CD4-positive, alpha-beta T cell (primary cell): ENCODE measurements at regions of chr5 and their contacts with region 1.

Region 1: DNA sequence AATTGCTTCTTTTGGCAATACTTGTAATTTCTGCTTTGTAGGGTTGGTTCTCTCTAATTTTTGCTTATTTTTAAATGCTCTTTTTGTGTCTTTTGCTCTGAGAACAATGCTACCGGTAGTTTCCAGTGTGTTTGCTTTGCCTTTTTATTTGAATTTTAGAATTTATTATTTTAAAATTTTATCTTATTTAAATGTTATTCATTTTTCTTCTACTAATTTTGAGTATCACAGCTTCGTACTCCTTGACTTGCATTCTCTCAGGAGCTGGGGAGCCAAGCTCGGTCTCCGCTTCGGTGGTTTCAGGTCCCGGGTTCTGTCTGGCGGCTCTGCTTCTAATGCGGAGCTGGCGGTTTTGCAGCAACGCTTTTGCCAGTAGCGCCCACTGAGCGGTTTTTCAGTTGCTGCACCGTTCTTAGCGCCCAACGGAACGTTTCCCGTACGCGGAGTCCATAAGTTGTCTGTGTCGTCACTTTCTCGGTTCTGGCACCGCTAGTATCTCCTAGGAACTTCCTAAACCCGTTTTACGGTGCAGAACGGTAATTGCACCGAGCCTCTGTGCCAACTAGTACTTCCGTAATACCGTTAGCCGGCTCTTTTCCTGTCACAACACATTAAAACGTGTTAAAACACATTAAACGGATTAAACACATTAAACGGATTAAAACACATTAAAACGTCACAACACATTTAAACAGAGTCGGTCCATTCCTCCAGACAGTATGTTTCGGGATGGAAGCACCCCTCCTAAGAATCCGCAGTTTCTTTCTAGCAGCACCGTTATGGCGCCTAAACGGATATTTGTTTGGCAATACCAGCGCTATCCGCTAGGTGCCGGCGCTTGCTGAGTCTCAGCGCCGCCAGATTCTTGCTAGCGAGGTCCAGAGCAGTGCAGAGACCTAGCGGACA is 45.6 kb downstream of the ANXA2R start:
- DNase-seq: peak; percentile 81 to 94 (median 84)
- ATAC-seq: peak; percentile 59
- H3K4me3 ChIP-seq: peak overlapping the region; percentile 80
- H3K4me3 Mint-ChIP-seq: peak overlapping the region; percentile 100
- H3K27ac ChIP-seq: peak overlapping the region; percentile 93 to 98
- H3K27ac Mint-ChIP-seq: peak overlapping the region; percentile 99
- H3K4me1 ChIP-seq: peaks cover 46% of the 10 kb centered on the region
- H3K4me1 Mint-ChIP-seq: peaks cover 48% of the 10 kb centered on the region
- H3K27me3 ChIP-seq: no peaks in the 10 kb centered on the region
- H3K27me3 Mint-ChIP-seq: peaks cover 9% of the 10 kb centered on the region
- CTCF ChIP-seq: peak; percentile 85

Region 2: GRCh38 chr5:42940853-42941252 is 53.6 kb before region 1 on chr5:
- CTCF ChIA-PET with region 1: no interaction called
- POLR2A ChIA-PET with region 1: interaction called, 13 read pairs
- intact Hi-C with region 1: no loop called
- DNase-seq: no peak
- ATAC-seq: no peak
- H3K4me3 ChIP-seq: no peak overlapping the region
- H3K4me3 Mint-ChIP-seq: no peak overlapping the region
- H3K27ac ChIP-seq: no peak overlapping the region
- H3K27ac Mint-ChIP-seq: no peak overlapping the region
- H3K4me1 ChIP-seq: no peaks in the 10 kb centered on the region
- H3K4me1 Mint-ChIP-seq: peaks cover 5% of the 10 kb centered on the region
- H3K27me3 ChIP-seq: no peaks in the 10 kb centered on the region
- H3K27me3 Mint-ChIP-seq: no peaks in the 10 kb centered on the region
- CTCF ChIP-seq: no peak

Region 3: GRCh38 chr5:43008369-43009153 is 14.1 kb after region 1 on chr5:
- CTCF ChIA-PET with region 1: interaction called, 32 read pairs
- POLR2A ChIA-PET with region 1: interaction called, 1,251 read pairs
- intact Hi-C with region 1: loop called (anchors 1 kb)
- DNase-seq: peak; percentile 87 to 97 (median 92)
- ATAC-seq: peak; percentile 63
- H3K4me3 ChIP-seq: peak overlapping the region; percentile 82
- H3K4me3 Mint-ChIP-seq: peak overlapping the region; percentile 92
- H3K27ac ChIP-seq: peak overlapping the region; percentile 91 to 95
- H3K27ac Mint-ChIP-seq: peak overlapping the region; percentile 95
- H3K4me1 ChIP-seq: peaks cover 36% of the 10 kb centered on the region
- H3K4me1 Mint-ChIP-seq: peaks cover 42% of the 10 kb centered on the region
- H3K27me3 ChIP-seq: no peaks in the 10 kb centered on the region
- H3K27me3 Mint-ChIP-seq: no peaks in the 10 kb centered on the region
- CTCF ChIP-seq: no peak

Region 4: DNA sequence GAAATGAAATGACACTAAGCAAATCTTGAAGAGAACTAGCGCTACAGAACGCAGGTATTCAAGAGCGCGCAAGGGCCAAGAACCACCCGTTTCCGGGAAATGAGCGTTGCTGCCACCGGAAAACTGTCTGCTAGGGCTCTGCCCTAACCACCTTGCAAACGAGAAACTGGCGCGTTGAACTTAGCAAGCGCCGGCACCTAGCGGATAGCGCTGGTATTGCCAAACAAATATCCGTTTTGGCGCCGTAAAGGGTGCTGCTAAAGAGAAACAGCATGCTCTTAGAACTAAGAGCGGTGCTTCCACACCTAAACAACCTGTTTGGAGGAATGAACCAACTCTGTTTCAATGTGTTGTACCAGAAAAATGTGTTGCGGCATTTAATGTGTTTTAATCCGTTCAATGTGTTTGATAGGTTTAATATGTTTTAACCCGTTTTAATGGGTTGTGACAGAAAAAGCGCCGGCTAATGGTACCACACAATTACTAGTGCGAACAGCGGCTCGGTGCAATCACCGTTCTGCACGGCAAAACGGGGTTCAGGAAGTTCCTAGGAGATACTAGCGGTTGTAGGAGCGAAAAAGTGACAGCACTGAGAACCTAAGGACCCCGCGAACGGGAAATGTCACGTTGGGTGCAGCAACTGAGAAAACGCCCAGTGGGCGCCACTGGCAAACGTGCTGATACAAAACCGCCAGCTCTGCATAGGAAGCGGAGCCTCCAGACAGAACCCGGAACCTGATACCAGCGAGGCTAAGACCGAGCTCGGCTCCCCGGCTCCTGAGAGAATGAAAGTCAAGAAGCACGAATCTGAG is 46.0 kb after region 1 on chr5 and contains the start of gene ANXA2R:
- CTCF ChIA-PET with region 1: interaction called, 36 read pairs
- POLR2A ChIA-PET with region 1: interaction called, 900 read pairs
- intact Hi-C with region 1: loop called (anchors 1 to 2 kb)
- DNase-seq: peak; percentile 90 to 98 (median 93)
- ATAC-seq: peak; percentile 53
- H3K4me3 ChIP-seq: peak within 1 kb of the TSS; percentile 84
- H3K4me3 Mint-ChIP-seq: peak within 1 kb of the TSS; percentile 98
- H3K27ac ChIP-seq: peak within 1 kb of the TSS; percentile 96 to 98
- H3K27ac Mint-ChIP-seq: peak within 1 kb of the TSS; percentile 98
- H3K4me1 ChIP-seq: peaks cover 73% of the 10 kb centered on the region
- H3K4me1 Mint-ChIP-seq: peaks cover 46% of the 10 kb centered on the region
- H3K27me3 ChIP-seq: no peaks in the 10 kb centered on the region
- H3K27me3 Mint-ChIP-seq: no peaks in the 10 kb centered on the region
- CTCF ChIP-seq: peak; percentile 86
- total RNA-seq, gene ANXA2R: 45.6 to 48.9 TPM

Region 5: DNA sequence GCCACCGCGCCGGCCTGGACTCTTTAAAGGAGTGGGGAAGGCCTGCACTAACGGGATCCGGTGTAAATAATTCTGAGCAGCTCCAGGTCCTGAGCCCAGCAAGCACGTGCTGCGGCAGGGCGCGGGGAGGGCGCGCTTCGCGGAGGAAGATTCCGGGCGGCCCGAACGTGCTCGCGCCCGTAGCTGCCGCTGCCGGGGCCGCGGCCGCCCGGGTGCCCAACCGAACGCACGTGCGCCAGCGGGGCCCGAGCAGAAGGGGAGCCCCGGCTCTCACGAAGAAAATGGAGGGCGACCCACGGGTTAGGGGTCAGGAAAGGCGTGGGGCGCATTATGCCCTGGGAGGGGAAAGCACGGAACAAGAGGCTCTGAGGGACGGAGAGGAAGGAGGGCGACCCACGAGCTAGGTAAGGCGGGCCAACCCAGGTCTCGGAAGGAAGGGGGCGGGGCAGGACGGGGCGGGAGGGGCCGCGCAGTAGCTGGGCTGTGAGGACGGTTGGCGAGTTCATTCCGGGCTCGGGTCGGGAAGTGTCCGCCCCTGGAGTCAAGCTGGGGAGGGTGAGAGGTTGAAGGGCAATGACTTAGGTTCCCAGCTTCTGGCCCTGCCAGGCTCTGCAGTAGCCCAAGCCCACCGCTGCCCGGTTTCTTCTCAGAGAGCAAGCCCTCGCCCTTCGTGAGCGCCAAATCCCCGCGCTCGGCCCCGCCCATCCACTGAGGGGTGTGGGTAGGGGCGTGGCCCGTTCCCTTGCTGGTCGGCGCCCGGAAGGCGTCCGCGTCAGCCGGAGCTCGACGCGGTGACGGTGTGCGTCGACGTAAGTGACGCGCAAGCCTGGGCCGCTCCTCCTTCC is 126.4 kb after region 1 on chr5 and contains the start of gene ZNF131:
- CTCF ChIA-PET with region 1: interaction called, 3 read pairs
- POLR2A ChIA-PET with region 1: interaction called, 169 read pairs
- intact Hi-C with region 1: loop called (anchors 5 kb)
- DNase-seq: peak; percentile 92 to 99 (median 97)
- ATAC-seq: peak; percentile 84
- H3K4me3 ChIP-seq: peak within 1 kb of the TSS; percentile 91
- H3K4me3 Mint-ChIP-seq: peak within 1 kb of the TSS; percentile 97
- H3K27ac ChIP-seq: peak within 1 kb of the TSS; percentile 93 to 94
- H3K27ac Mint-ChIP-seq: peak within 1 kb of the TSS; percentile 94
- H3K4me1 ChIP-seq: peaks cover 30% of the 10 kb centered on the region
- H3K4me1 Mint-ChIP-seq: peaks cover 39% of the 10 kb centered on the region
- H3K27me3 ChIP-seq: no peaks in the 10 kb centered on the region
- H3K27me3 Mint-ChIP-seq: no peaks in the 10 kb centered on the region
- CTCF ChIP-seq: no peak
- total RNA-seq, gene ZNF131: 71.7 to 72.4 TPM